Activated B cell treated with CpG ODN at 0.5 μM for 24 hours (primary cell): ENCODE measurements at regions of chr1 and their contacts with region 1.

Region 1: GRCh38 chr1:152013664-152014237 is 20.1 kb upstream of the S100A10 start:
- DNase-seq: no peak
- ATAC-seq: no peak
- H3K4me3 Mint-ChIP-seq: no peak overlapping the region
- H3K27ac Mint-ChIP-seq: no peak overlapping the region
- H3K4me1 Mint-ChIP-seq: no peaks in the 10 kb centered on the region
- H3K27me3 Mint-ChIP-seq: peaks cover 28% of the 10 kb centered on the region
- CTCF ChIP-seq: no peak

Region 2: DNA sequence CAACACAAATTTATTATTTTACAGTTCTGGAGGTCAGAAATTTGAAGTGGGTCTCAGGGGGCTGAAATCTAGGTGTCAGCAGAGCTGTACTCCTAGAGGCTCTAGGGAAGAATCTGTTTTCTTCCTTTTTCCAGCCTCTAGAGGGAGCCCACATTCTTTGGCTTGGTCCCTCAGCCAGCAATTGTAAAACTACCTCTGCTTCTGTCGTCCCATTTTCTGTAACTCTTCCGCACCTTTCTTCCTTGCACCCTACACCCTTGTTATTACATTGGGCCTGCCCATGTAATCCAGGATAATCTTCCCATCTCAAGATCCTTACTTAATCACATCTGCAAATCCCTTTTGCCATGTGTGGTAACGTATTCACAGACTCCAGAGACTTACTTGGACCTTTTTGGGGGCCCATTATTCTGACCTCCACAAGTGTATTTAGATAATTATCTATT is 79.7 kb before region 1 on chr1:
- CTCF ChIA-PET with region 1: interaction called, 10 read pairs
- POLR2A ChIA-PET with region 1: no interaction called
- intact Hi-C with region 1: no loop called
- DNase-seq: no peak
- ATAC-seq: peak; percentile 90
- H3K4me3 Mint-ChIP-seq: no peak overlapping the region
- H3K27ac Mint-ChIP-seq: no peak overlapping the region
- H3K4me1 Mint-ChIP-seq: peaks cover 2% of the 10 kb centered on the region
- H3K27me3 Mint-ChIP-seq: peaks cover 11% of the 10 kb centered on the region
- CTCF ChIP-seq: peak; percentile 86

Region 3: GRCh38 chr1:152141974-152142584 is 128.3 kb after region 1 on chr1:
- CTCF ChIA-PET with region 1: no interaction called
- POLR2A ChIA-PET with region 1: no interaction called
- intact Hi-C with region 1: no loop called
- DNase-seq: no peak
- ATAC-seq: no peak
- H3K4me3 Mint-ChIP-seq: no peak overlapping the region
- H3K27ac Mint-ChIP-seq: no peak overlapping the region
- H3K4me1 Mint-ChIP-seq: no peaks in the 10 kb centered on the region
- H3K27me3 Mint-ChIP-seq: peaks cover 31% of the 10 kb centered on the region
- CTCF ChIP-seq: no peak